Naive thymus-derived CD4-positive, alpha-beta T cell (primary cell): ENCODE measurements at regions of chr12 and their contacts with region 1.

Region 1: DNA sequence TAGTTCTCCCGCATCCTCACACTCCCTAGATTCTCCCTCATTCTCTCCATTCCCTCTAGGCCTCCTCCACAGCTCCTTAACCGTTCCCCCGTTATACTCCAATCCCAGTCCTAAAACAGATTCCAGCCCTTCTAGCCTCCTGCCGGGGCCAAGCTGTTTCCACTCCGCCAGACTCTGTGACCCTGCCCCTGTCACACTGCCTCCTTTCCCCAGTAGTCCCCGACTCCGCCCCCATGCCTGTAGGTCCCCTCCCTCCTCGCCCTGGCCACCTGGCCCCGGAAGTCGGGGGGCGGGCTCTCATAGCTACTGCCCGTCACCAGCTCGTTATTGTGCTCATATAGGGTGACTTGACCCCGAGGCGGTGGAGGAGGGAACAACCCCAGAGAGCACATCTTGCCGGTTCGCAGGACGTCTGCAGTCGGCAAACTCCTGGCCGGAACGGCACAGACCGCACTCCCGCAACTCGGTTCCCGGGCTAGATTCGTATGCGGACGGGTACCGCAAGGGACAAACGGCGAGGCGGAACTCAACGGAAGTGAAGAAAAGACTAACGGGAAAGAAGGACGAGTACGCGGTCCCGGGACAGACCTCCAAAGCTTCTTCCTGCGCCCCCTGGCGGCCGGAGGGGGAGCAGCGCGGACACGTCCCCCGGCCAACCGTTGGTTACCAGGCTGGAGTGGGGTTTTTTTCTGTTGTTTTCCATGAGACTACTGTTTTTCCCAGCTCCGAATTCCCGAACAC is at the start of gene AAAS:
- DNase-seq: peak; percentile 89 to 95 (median 94)
- ATAC-seq: peak; percentile 89
- H3K4me3 ChIP-seq: peak within 1 kb of the TSS; percentile 98
- H3K4me3 Mint-ChIP-seq: peak within 1 kb of the TSS; percentile 94 to 99 (median 96)
- H3K27ac ChIP-seq: peak within 1 kb of the TSS; percentile 73
- H3K27ac Mint-ChIP-seq: peak within 1 kb of the TSS; percentile 94 to 98 (median 94)
- H3K4me1 ChIP-seq: peaks cover 25 to 37% of the 10 kb centered on the region in 2 donors
- H3K4me1 Mint-ChIP-seq: peaks cover 23 to 47% (median 43%) of the 10 kb centered on the region in 7 donors
- H3K27me3 ChIP-seq: no peaks in the 10 kb centered on the region
- H3K27me3 Mint-ChIP-seq: peaks cover 0 to 3% (median 0%) of the 10 kb centered on the region in 5 donors
- total RNA-seq, gene AAAS: 35.4 to 73.5 (median 69.0) TPM

Region 2: DNA sequence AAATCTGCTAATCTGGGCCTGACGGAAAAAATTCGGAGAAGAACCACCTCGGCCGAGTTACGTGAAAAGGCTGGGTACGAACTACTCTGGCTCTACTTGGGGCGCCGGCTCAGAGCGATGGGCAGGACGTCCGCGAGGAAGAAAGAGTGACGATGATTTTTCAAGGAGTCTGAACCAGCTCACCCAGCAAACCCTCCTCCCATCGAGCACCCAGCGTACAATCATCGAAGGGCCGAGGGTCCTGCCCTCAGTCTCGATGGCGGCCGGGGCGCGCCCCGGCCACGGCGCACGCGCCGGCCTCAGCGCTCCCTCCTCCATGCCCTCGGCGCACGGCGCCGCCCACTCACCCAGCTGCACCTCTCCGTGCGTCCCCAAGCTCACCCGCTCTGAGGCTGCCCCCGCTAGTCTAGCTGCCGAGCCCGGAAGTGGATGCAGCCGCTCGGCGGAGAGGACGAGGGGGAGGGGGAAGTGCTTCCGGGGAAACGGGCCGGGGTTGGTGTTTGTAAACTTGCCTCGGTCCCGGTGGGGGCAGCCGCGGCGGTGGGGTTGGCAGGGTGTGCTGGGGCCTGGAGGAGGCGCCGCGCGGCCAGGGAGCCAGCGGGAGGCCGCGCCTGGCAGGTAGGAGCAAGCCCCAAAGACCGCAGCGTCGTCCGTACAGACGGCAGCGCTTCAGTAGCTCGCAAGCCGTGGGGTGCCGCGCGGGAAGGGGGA is 140.9 kb before region 1 on chr12 and contains the starts of genes CSAD and ZNF740:
- CTCF ChIA-PET with region 1: interaction called, 4 read pairs
- POLR2A ChIA-PET with region 1: interaction called, 10 read pairs
- intact Hi-C with region 1: loop called (anchors 1 kb)
- DNase-seq: peak; percentile 86 to 98 (median 97)
- ATAC-seq: peak; percentile 98
- H3K4me3 ChIP-seq: peak within 1 kb of the TSS; percentile 89
- H3K4me3 Mint-ChIP-seq: peak within 1 kb of the TSS; percentile 84 to 98 (median 92)
- H3K27ac ChIP-seq: peak within 1 kb of the TSS; percentile 92
- H3K27ac Mint-ChIP-seq: peak within 1 kb of the TSS; percentile 93 to 98 (median 97)
- H3K4me1 ChIP-seq: peaks cover 30 to 46% of the 10 kb centered on the region in 2 donors
- H3K4me1 Mint-ChIP-seq: peaks cover 44 to 57% (median 52%) of the 10 kb centered on the region in 7 donors
- H3K27me3 ChIP-seq: no peaks in the 10 kb centered on the region
- H3K27me3 Mint-ChIP-seq: no peaks in the 10 kb centered on the region
- total RNA-seq, gene CSAD: 34.1 to 76.3 (median 69.1) TPM
- total RNA-seq, gene ZNF740: 37.2 to 135 (median 49.5) TPM

Region 3: DNA sequence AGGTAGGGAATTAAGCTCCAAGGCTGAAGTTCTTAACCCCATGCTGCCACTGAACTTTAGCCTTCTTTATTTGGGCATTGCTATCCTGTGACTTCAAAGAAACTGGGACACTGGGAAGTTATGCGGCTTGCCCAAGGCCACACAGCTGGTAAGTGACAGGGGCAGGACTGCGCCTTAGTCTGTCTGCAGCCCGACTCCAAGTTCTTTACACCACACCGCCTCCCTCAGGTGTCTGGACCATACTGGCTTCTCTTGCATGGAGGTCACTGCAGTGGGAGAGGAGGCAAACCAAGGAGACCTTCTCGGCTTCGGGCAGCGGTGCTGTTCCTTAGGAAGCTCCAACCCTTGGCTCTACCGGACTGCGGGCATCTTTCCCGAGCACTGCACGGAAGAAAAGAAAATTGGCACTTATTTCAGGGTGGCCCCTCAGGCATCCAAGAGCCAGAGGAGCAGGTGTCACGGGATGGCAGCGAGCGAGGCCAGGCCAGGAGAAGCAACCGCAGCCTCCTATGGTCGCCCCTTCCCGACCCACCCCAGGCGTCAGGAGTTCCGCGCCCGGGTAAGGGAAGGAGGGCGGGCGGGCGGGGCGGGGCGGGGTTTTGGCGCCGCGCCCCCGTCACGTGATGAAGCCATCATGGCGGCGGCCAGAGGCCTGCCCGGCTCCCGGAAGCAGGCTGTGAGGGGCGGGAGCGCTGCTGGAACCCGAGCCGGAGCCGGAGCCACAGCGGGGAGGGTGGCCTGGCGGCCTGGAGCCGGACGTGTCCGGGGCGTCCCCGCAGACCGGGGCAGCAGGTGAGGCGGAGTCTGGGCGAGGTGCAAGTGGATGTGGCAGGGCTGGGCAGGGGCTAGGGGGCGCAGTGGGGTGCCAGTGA is 69.5 kb before region 1 on chr12:
- CTCF ChIA-PET with region 1: interaction called, 4 read pairs
- POLR2A ChIA-PET with region 1: no interaction called
- intact Hi-C with region 1: loop called (anchors 1 kb)
- DNase-seq: peak; percentile 58 to 81 (median 69)
- ATAC-seq: peak; percentile 90
- H3K4me3 ChIP-seq: peak overlapping the region; percentile 95
- H3K4me3 Mint-ChIP-seq: peak overlapping the region; percentile 89 to 98 (median 96)
- H3K27ac ChIP-seq: peak overlapping the region; percentile 95
- H3K27ac Mint-ChIP-seq: peak overlapping the region; percentile 84 to 97 (median 94)
- H3K4me1 ChIP-seq: peaks cover 26 to 38% of the 10 kb centered on the region in 2 donors
- H3K4me1 Mint-ChIP-seq: peaks cover 37 to 59% (median 48%) of the 10 kb centered on the region in 7 donors
- H3K27me3 ChIP-seq: no peaks in the 10 kb centered on the region
- H3K27me3 Mint-ChIP-seq: no peaks in the 10 kb centered on the region

Region 4: DNA sequence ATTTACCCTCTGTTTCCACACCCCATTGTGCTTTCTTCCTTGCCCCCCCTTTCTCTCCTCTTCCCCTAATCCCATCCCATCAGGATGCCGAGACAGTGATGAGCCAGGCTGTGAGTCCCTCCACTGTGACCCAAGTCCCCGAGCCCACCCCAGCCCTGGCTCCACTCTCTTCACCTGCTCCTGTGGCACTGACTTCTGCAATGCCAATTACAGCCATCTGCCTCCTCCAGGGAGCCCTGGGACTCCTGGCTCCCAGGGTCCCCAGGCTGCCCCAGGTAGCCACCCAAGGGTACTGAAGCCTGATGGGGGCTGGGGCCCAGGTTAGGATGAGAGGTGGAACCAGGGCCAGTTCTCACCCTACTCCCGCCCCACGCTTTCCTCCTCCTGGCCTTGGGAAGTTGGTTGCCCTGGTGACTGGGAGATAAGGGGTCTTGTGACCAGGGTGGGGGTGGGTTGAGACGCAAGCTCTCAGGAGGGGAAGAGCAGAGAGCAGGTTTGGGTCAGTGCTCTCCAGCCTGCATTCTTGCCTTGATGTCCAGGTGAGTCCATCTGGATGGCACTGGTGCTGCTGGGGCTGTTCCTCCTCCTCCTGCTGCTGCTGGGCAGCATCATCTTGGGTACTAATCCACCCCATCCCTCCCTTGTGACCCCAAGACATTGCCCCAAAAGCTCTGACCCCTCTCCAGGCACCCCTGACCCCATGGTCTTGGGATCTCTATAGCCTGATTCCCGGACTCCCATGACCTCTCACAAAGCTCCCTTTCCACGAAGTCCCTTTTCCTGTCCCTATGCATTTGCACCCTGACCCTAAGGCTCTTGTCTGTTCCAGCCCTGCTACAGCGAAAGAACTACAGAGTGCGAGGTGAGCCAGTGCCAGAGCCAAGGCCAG is 103.6 kb after region 1 on chr12:
- CTCF ChIA-PET with region 1: interaction called, 5 read pairs
- POLR2A ChIA-PET with region 1: interaction called, 3 read pairs
- intact Hi-C with region 1: loop called (anchors 1 kb)
- DNase-seq: no peak
- ATAC-seq: no peak
- H3K4me3 ChIP-seq: no peak overlapping the region
- H3K4me3 Mint-ChIP-seq: no peak overlapping the region
- H3K27ac ChIP-seq: no peak overlapping the region
- H3K27ac Mint-ChIP-seq: no peak overlapping the region
- H3K4me1 ChIP-seq: peaks cover 3 to 4% of the 10 kb centered on the region in 2 donors
- H3K4me1 Mint-ChIP-seq: peaks cover 4 to 15% (median 6%) of the 10 kb centered on the region in 7 donors
- H3K27me3 ChIP-seq: no peaks in the 10 kb centered on the region
- H3K27me3 Mint-ChIP-seq: no peaks in the 10 kb centered on the region

Region 5: GRCh38 chr12:53500776-53501614 is 179.8 kb after region 1 on chr12 and contains the start of gene TARBP2:
- CTCF ChIA-PET with region 1: interaction called, 4 read pairs
- POLR2A ChIA-PET with region 1: interaction called, 14 read pairs
- intact Hi-C with region 1: loop called (anchors 1 kb)
- DNase-seq: peak; percentile 87 to 99 (median 98)
- ATAC-seq: peak; percentile 87
- H3K4me3 ChIP-seq: peak within 1 kb of the TSS; percentile 84
- H3K4me3 Mint-ChIP-seq: peak within 1 kb of the TSS; percentile 86 to 96 (median 92)
- H3K27ac ChIP-seq: peak within 1 kb of the TSS; percentile 98
- H3K27ac Mint-ChIP-seq: peak within 1 kb of the TSS; percentile 87 to 100 (median 97)
- H3K4me1 ChIP-seq: peaks cover 24 to 27% of the 10 kb centered on the region in 2 donors
- H3K4me1 Mint-ChIP-seq: peaks cover 15 to 56% (median 43%) of the 10 kb centered on the region in 7 donors
- H3K27me3 ChIP-seq: no peaks in the 10 kb centered on the region
- H3K27me3 Mint-ChIP-seq: no peaks in the 10 kb centered on the region
- total RNA-seq, gene TARBP2: 25.1 to 45.2 (median 40.7) TPM

Region 6: GRCh38 chr12:53727310-53728041 is 406.2 kb after region 1 on chr12 and contains the start of gene CALCOCO1:
- CTCF ChIA-PET with region 1: interaction called, 3 read pairs
- POLR2A ChIA-PET with region 1: no interaction called
- intact Hi-C with region 1: loop called (anchors 1 to 5 kb)
- DNase-seq: peak; percentile 84 to 98 (median 95)
- ATAC-seq: peak; percentile 98
- H3K4me3 ChIP-seq: peak within 1 kb of the TSS; percentile 94
- H3K4me3 Mint-ChIP-seq: peak within 1 kb of the TSS; percentile 91 to 100 (median 94)
- H3K27ac ChIP-seq: peak within 1 kb of the TSS; percentile 73
- H3K27ac Mint-ChIP-seq: peak within 1 kb of the TSS; percentile 69 to 98 (median 91)
- H3K4me1 ChIP-seq: peaks cover 13 to 17% of the 10 kb centered on the region in 2 donors
- H3K4me1 Mint-ChIP-seq: peaks cover 10 to 41% (median 32%) of the 10 kb centered on the region in 7 donors
- H3K27me3 ChIP-seq: no peaks in the 10 kb centered on the region
- H3K27me3 Mint-ChIP-seq: peaks cover 0 to 13% (median 0%) of the 10 kb centered on the region in 5 donors
- total RNA-seq, gene CALCOCO1: 66.1 to 175 (median 137) TPM